IMR-90 (cell line): ENCODE measurements at regions of chr10 and their contacts with region 1.

Region 1: GRCh38 chr10:62437696-62438095 is 63.5 kb downstream of the ZNF365 start:
- DNase-seq: peak; percentile 82
- ATAC-seq: peak; percentile 81
- H3K4me3 ChIP-seq: no peak overlapping the region
- H3K27ac ChIP-seq: no peak overlapping the region
- H3K4me1 ChIP-seq: peaks cover 2% of the 10 kb centered on the region
- H3K27me3 ChIP-seq: no peaks in the 10 kb centered on the region
- CTCF ChIP-seq: peak; percentile 83
- POLR2A ChIP-seq: no peak
- RAD21 ChIP-seq: peak; percentile 83

Region 2: GRCh38 chr10:61342858-61343572 is 1094.7 kb before region 1 on chr10:
- CTCF ChIA-PET with region 1: no interaction called
- POLR2A ChIA-PET with region 1: no interaction called
- dilution Hi-C with region 1: no loop called
- in situ Hi-C with region 1: no loop called
- intact Hi-C with region 1: no loop called
- DNase-seq: no peak
- ATAC-seq: no peak
- H3K4me3 ChIP-seq: no peak overlapping the region
- H3K27ac ChIP-seq: no peak overlapping the region
- H3K4me1 ChIP-seq: no peaks in the 10 kb centered on the region
- H3K27me3 ChIP-seq: no peaks in the 10 kb centered on the region; the same call in 1 of the 2 replicates
- CTCF ChIP-seq: no peak
- POLR2A ChIP-seq: no peak
- RAD21 ChIP-seq: no peak

Region 3: DNA sequence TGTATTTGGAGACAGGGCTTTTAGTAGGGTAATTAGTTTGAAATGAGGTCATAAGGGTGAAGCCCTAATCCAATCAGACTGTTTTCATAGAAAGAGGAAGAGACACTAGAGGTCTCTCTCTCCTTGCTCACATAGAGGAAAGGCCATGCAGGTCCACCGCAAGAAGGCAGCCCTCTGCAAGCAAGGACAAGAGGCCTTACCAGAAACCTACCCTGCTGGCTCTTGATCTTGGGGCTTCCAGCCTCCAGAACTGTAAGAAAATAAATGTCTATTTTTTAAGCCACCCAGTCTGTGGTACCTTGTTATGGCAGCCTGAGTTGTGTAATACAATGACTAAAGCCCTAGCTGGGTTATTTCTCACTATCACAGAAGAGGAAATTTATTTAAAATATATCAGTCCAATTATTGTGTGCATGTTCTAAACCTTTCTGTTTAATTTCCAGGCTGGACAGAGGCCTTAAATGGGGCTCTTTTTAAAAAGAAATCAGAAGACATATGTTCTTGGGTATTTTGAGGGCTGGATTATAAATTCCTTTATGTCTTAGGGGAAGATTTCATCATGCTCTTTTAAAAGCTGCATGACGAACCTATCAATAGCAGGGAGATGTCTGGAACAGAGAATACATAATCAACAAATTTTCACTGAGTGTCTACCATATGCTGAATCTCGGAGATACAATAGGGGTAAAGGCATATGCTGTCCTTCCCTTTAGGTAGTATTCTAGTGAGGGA is 971.6 kb before region 1 on chr10:
- CTCF ChIA-PET with region 1: no interaction called
- POLR2A ChIA-PET with region 1: no interaction called
- dilution Hi-C with region 1: no loop called
- in situ Hi-C with region 1: no loop called
- intact Hi-C with region 1: no loop called
- DNase-seq: peak; percentile 34
- ATAC-seq: peak; percentile 21; the same call in 1 of the 2 replicates
- H3K4me3 ChIP-seq: no peak overlapping the region
- H3K27ac ChIP-seq: no peak overlapping the region
- H3K4me1 ChIP-seq: peaks cover 10% of the 10 kb centered on the region
- H3K27me3 ChIP-seq: no peaks in the 10 kb centered on the region
- CTCF ChIP-seq: no peak
- POLR2A ChIP-seq: no peak
- RAD21 ChIP-seq: no peak

Region 4: GRCh38 chr10:62095181-62096071 is 342.3 kb before region 1 on chr10:
- CTCF ChIA-PET with region 1: no interaction called
- POLR2A ChIA-PET with region 1: no interaction called
- dilution Hi-C with region 1: no loop called
- in situ Hi-C with region 1: no loop called
- intact Hi-C with region 1: loop called (anchors 10 kb)
- DNase-seq: peak; percentile 69
- ATAC-seq: no peak
- H3K4me3 ChIP-seq: no peak overlapping the region
- H3K27ac ChIP-seq: peak overlapping the region; percentile 98; the same call in 1 of the 2 replicates
- H3K4me1 ChIP-seq: peaks cover 39% of the 10 kb centered on the region
- H3K27me3 ChIP-seq: no peaks in the 10 kb centered on the region
- CTCF ChIP-seq: no peak
- POLR2A ChIP-seq: no peak
- RAD21 ChIP-seq: no peak

Region 5: GRCh38 chr10:62422068-62422590 is 15.6 kb before region 1 on chr10:
- CTCF ChIA-PET with region 1: interaction called, 11 read pairs
- POLR2A ChIA-PET with region 1: no interaction called
- dilution Hi-C with region 1: no loop called
- in situ Hi-C with region 1: no loop called
- intact Hi-C with region 1: no loop called
- DNase-seq: peak; percentile 90
- ATAC-seq: peak; percentile 88
- H3K4me3 ChIP-seq: no peak overlapping the region
- H3K27ac ChIP-seq: no peak overlapping the region
- H3K4me1 ChIP-seq: no peaks in the 10 kb centered on the region
- H3K27me3 ChIP-seq: no peaks in the 10 kb centered on the region; the same call in 1 of the 2 replicates
- CTCF ChIP-seq: peak; percentile 20; the same call in 1 of the 2 replicates
- POLR2A ChIP-seq: no peak
- RAD21 ChIP-seq: no peak

Region 6: DNA sequence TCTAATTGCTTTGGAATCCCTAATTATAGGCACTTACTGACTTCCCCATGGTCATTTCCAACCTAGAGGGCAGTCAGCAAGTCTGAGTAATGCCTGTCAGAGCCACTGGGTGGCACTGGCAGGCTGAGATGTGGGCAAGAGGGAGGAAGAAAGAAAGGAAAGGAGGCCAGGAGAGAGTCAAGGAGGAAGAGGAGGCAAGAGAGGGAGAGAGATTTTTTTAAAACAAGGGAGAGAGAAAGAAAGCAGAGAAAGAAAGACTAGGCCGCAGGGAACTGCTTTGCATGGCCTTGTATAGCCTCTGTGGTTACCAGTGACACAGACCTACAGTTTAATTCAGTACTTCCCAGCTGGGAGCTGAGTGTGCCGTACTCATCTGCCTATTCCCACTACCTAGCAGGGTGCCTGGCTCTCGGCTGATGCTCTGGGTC is 156.4 kb after region 1 on chr10:
- CTCF ChIA-PET with region 1: interaction called, 21 read pairs
- POLR2A ChIA-PET with region 1: no interaction called
- dilution Hi-C with region 1: no loop called
- in situ Hi-C with region 1: no loop called
- intact Hi-C with region 1: no loop called
- DNase-seq: peak; percentile 56
- ATAC-seq: peak; percentile 96
- H3K4me3 ChIP-seq: no peak overlapping the region
- H3K27ac ChIP-seq: no peak overlapping the region
- H3K4me1 ChIP-seq: no peaks in the 10 kb centered on the region
- H3K27me3 ChIP-seq: no peaks in the 10 kb centered on the region
- CTCF ChIP-seq: peak; percentile 93
- POLR2A ChIP-seq: no peak
- RAD21 ChIP-seq: peak; percentile 93

Region 7: DNA sequence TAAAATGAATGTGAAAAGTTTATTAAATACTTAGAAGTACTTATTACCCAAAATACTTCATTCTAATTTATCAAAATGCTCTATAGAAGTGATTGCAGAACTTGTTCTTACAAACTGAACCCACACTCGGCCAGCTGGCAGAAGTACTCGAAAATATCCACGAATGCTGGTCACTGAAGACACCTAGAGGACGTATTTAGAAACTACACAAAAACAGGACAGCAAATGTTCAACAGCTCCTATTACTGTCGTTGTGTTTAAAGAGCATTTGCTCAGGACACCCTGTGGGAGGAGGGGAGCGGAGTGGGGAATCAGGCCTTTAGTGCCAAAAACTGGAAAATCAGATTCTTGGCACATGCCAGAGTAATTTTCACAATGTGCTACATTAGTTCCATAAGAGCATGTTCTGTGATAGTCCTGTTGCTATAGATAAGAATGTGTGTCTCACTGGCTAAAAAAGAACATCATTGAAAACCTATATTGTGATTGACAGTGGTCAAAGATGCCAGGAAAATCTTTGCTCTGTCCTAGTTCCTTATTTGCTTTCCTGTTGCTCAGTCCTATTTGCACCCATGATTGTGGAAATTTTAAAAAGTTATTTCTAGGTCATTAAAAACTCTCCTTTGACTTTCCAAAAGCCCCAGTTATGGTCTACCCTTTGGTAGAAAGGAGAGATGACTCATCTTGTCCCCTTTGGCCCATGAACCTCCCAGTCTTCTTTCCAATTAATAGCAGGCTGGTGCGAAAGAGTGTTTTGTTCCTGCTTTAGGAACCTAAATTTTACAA is 646.4 kb after region 1 on chr10:
- CTCF ChIA-PET with region 1: no interaction called
- POLR2A ChIA-PET with region 1: no interaction called
- dilution Hi-C with region 1: no loop called
- in situ Hi-C with region 1: loop called (anchors 10 kb)
- intact Hi-C with region 1: loop called (anchors 5 kb)
- DNase-seq: peak; percentile 77
- ATAC-seq: peak; percentile 95
- H3K4me3 ChIP-seq: no peak overlapping the region
- H3K27ac ChIP-seq: no peak overlapping the region
- H3K4me1 ChIP-seq: no peaks in the 10 kb centered on the region; the same call in 1 of the 2 replicates
- H3K27me3 ChIP-seq: no peaks in the 10 kb centered on the region; the same call in 1 of the 2 replicates
- CTCF ChIP-seq: peak; percentile 74
- POLR2A ChIP-seq: no peak
- RAD21 ChIP-seq: peak; percentile 81